Sciatic nerve (tissue), 2 donors: ENCODE measurements at regions of chr3 and their contacts with region 1.

Region 1: DNA sequence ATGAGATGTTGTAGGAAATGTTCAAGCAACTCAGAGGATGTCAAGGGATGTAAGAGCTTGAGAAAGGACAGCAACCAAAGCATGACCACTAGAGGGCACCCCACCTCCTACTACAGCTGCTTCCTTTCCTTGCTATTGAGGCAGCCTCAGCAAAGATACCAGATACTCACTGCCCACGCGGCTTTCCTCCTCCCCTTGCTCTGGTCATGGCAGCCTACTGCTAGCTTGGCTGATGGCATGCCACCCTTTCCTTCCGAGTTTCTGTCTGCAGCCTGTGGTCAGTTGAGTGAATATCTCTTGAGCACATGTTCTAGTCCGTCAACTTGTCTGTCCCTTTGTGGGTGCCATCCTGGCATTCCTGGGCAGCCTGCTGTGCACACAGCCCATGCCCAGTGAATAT is 4.4 kb upstream of the CXCR6 start:
- DNase-seq: peak; percentile 92
- ATAC-seq: peak; percentile 94

Region 2: DNA sequence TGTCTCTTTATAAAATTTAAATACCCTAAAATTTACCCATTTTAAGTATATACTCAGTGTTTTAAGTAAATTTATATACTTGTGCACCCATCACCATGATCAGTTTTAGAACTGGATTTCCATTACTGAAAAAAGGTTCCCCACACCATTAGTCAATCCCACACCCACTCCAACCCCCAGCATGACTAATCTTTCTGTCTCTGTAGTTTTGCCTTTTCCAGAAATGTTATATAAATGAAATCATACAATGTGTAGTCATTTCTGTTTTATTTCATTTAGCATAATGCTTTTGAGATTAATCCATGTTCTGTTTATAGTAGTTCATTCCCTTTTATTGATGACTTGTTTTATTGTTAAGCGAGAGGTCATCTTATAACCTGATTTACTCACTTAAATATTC is 410.4 kb before region 1 on chr3:
- intact Hi-C with region 1: no loop called
- DNase-seq: no peak
- ATAC-seq: no peak

Region 3: DNA sequence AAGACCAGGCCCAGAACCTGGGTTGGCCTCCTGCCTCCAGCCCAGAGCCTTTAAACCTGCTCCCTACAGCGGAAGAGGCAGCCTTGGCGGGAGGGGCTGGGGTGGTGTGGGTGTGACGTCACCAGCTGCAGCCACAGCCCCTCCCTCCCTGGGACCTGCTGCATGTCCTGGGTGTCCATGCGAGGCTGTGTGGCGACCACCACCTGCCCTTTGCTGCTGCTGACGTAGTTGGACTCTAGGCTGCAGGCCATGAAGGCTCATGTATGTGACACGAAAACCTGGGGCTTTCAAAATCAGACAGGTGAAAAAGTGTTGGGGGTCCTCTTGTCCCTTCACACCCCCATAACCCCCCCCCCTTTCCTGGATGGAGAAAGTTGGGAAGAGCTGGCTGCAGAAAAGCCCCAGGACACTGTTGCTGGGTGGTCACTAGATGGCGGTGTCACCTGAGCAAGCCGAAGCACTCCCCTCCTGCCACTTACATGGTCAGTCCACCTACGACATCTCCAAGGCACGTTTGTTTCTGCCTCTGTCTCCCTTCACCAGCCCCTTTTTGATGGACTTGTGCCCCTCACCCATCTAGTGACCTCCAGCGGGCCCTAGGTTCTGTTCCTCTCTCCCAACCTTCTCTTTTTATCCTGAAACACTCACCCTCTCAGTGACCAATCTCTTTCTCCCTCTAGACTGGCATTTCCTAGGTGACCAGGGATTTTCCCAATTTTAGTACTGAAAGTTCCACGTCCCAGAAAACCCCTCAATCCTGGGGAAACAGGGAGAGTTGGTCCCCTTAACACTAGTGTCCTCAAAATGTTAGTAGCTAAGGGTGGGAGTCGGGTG is 177.8 kb before region 1 on chr3:
- intact Hi-C with region 1: loop called (anchors 5 kb)
- DNase-seq: no peak
- ATAC-seq: peak; percentile 91

Region 4: DNA sequence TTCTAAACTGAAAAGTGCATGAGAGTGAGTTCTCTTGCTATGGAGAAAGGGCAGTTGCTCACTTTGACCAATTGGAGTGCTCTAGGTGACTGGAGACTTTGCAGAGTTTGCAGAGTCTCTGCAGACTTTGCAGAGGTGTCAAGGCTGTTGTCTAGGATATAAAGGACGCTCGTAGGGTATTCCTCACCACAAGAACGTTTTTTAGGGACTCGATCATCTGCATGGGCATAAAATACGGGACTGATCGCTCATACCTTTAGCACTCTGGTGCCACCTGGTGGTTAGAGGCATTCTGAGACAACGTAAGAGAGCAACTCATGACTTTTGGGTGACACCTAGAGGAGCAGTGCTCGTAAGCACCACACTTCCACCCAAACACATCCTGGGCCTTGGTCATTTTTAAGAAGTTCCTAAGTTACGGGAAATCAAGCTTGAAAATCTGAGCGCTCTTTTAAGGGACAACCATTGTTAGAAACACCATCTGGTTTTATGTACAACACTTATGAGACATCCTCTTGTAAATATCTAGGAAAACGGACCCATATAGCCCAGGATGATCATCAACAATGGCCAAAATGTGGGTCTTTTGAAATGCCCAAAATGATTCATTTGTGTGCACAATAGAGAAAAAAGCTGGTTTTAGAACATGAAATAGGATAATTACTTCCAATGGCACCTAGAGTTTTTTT is 140.0 kb after region 1 on chr3:
- intact Hi-C with region 1: loop called (anchors 2 kb)
- DNase-seq: peak; percentile 96
- ATAC-seq: peak; percentile 94

Region 5: DNA sequence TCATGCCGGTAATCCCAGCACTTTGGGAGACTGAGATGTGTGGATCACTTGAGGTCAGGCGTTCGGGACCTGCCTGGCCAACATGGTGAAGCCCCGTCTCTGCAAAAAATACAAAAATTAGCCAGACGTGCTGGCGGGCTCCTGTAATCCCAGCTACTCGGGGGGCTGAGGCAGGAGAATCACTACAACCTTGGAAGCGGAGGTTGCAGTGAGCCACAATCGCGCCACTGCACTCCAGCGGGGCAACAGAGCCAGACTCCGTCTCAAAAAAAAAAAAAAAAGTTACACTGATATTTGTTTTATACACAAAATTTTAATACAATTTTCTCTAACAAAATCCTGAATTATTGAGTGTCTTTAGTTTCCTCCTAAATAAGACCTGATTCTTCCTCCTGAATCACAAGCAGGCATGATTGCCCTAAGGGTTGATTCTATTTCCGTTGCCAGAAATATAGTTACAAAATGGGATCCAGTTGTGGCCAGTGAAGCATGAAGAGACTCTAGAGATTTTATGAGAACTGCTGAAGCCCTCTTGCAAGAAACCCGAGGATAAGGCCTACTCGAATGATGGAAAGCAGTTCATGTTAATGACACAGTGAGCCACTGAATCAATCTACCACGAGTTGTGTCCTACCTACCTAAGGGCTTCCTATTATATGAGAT is 1852.5 kb after region 1 on chr3:
- intact Hi-C with region 1: no loop called
- DNase-seq: no peak
- ATAC-seq: no peak